Activated B cell treated with CpG ODN at 0.5 μM for 24 hours (primary cell): ENCODE measurements at regions of chr3 and their contacts with region 1.

Region 1: DNA sequence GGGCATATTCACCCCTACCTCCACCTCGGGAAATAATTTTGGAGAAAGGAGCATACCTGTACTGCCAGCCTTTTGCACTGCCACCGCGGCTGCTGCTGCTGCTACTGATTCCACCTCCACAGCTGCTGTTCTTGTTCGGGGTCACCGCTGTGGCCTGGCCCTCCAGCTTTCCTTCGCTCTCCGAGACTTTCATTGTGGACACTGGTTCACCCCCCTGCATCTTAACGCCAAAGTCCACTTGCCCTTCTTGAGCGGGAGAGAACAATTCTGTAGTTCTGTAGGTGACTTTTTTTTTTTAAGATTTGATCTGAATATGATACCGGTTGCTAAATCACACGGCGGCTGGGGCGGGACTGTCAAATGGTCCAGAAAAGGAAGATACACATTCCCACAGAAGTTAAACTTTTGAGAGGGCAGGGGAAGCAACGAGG is 701 bp downstream of the OSBPL11 start:
- DNase-seq: no peak
- ATAC-seq: no peak
- H3K4me3 Mint-ChIP-seq: peak overlapping the region; percentile 97
- H3K27ac Mint-ChIP-seq: peak overlapping the region; percentile 92
- H3K4me1 Mint-ChIP-seq: peaks cover 44% of the 10 kb centered on the region
- H3K27me3 Mint-ChIP-seq: no peaks in the 10 kb centered on the region
- CTCF ChIP-seq: no peak

Region 2: DNA sequence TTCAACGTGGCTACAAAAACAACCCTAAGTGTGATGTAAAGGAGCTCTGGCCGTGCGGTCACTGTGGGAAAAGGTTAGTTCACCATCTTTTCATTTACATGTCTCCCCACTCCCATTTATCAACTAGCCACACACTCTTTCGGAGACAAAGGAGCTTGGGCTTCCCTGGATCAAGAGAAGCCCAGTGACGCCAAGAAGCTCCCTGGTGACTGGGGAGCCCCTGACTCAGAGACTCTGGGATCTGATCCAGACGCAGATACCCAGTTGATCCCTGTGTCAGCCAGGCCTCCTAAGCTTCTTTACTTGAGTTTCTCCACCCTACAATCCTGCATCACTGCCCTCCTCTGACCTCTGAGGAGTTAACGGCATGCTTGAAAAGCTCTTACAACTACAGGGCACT is 582.7 kb before region 1 on chr3:
- CTCF ChIA-PET with region 1: no interaction called
- POLR2A ChIA-PET with region 1: no interaction called
- intact Hi-C with region 1: no loop called
- DNase-seq: no peak
- ATAC-seq: no peak
- H3K4me3 Mint-ChIP-seq: no peak overlapping the region
- H3K27ac Mint-ChIP-seq: no peak overlapping the region
- H3K4me1 Mint-ChIP-seq: no peaks in the 10 kb centered on the region
- H3K27me3 Mint-ChIP-seq: no peaks in the 10 kb centered on the region
- CTCF ChIP-seq: no peak

Region 3: DNA sequence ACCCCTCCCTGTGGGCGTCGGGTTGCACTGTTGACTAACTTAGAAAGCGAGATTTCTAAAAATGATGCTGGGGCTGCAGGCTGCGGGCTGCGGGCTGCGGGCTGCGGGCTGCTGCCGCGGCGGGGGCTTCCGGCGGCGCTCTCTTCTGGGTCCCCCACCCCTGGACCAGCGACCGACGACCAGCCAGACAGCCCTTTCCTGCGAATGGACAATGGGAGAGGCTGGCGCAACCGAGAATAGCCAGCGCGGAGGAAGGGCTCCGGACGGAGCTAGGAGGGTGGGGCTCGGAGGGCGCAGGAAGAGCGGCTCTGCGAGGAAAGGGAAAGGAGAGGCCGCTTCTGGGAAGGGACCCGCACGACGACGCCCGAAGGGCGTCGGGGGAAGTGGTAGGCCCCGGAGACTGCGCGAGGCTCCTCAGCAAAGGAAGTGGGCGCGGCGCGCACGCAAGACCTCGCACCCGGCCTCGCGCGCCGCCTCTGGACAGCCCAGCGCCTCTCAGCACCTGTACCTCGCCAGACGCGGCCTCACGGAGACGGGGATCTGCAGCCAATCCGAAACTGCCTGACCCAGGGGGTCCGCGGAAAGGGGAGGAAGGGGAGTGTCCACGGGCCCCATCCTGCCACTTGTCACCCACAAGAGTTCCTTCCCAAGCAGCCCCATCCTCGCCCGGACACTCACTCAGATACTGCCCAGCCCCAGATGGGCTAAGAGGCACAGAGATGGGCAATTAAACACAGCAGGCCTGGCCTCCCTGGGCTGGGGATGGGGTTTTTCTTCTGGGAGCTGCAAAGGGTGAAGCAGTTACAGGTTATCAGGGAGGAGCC is 452.8 kb before region 1 on chr3:
- CTCF ChIA-PET with region 1: no interaction called
- POLR2A ChIA-PET with region 1: interaction called, 6 read pairs
- intact Hi-C with region 1: loop called (anchors 10 kb)
- DNase-seq: peak; percentile 44
- ATAC-seq: peak; percentile 88
- H3K4me3 Mint-ChIP-seq: peak overlapping the region; percentile 82
- H3K27ac Mint-ChIP-seq: peak overlapping the region; percentile 79
- H3K4me1 Mint-ChIP-seq: peaks cover 66% of the 10 kb centered on the region
- H3K27me3 Mint-ChIP-seq: no peaks in the 10 kb centered on the region
- CTCF ChIP-seq: no peak

Region 4: DNA sequence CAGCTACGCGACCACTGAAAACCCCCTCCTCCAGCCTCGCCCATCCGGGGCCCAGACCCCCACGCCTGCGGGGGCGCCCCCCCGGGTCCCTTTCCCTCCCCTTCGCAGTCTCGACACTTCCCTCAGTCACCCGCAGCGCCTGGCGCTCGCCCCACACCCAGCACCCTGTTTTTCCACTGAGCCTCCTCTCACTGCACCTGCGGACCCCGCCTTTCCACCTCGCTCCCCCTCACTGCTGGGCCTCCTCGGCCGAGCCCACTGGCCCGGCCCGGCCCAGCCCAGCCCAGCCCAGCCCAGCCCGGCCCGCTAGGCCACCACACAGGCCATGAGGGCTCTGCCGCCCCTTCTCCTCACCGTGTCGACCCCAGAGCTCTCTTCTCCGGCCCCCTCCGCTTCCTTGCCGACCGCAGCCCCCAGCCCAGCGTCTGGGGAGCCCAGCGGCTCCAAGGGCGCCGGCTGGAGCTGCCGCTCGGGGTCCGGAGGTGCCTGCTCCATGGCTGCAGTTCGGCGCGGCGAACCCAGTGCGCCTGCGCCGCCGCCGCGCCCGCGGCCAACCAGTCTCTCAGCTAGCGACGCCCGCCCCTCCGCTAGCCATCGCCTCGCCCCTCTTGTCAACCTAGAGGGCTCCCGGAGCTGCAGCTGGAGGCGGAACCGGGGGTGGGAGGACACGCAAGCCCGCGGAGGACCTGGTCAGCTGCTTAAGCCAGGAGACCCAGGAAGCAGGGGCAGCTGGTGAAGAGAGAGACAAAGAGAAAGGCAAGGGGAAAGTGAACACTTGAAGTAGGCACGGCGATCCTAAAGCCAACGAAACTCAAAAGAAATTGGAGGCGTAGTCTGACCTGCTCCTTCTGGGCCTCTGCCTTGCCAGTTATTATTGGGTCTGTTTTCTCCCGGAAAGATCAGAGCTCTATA is 74.7 kb before region 1 on chr3 and contains the start of gene SNX4:
- CTCF ChIA-PET with region 1: no interaction called
- POLR2A ChIA-PET with region 1: interaction called, 17 read pairs
- intact Hi-C with region 1: loop called (anchors 1 kb)
- DNase-seq: peak; percentile 79
- ATAC-seq: peak; percentile 97
- H3K4me3 Mint-ChIP-seq: peak within 1 kb of the TSS; percentile 98
- H3K27ac Mint-ChIP-seq: peak within 1 kb of the TSS; percentile 92
- H3K4me1 Mint-ChIP-seq: peaks cover 39% of the 10 kb centered on the region
- H3K27me3 Mint-ChIP-seq: no peaks in the 10 kb centered on the region
- CTCF ChIP-seq: no peak
- total RNA-seq, gene SNX4: 28.2 and 30.2 TPM in 2 replicates

Region 5: DNA sequence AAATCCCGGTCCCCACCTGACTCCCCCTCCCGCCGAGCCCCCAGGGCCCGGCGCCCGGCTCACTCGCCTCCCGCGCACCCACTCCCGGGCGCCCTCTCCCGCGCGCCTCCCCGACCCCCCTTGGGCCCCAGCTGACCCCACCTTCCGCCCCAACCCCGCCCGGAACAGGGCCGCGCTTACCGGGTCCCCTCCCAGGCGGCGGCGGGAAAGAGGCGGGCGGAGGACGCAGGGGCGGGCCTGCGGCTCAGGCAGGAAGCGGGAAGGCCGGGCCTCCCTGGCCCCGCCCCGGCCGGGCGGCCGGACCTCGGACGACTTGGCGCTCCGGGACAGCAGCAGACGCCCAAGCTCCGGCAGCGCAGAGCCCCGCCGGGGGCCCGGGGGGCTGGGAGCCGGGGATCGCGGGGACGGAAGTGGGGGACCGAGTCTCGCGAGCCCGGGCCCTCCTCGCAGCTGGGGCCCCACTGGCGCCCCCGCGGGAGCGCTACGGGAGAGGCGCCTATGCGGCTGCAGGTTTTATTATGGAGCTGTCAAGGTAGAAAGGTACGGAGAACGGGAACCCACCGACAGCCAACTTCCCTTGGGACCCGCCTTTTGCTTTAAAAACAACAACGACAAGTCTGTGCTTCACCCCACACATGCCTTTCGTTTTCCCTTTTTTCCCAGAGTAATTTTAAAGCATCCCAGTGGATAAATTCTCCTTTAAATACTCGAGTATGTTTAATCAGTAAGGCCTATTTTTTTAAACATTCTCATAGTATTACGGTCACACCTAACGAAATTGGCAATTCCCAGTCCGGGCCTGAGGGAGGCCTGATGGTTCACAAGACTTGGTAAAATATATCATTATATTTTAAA is 489.5 kb after region 1 on chr3 and contains the start of gene SLC41A3:
- CTCF ChIA-PET with region 1: no interaction called
- POLR2A ChIA-PET with region 1: interaction called, 7 read pairs
- intact Hi-C with region 1: loop called (anchors 5 kb)
- DNase-seq: peak; percentile 87
- ATAC-seq: peak; percentile 93
- H3K4me3 Mint-ChIP-seq: peak within 1 kb of the TSS; percentile 88
- H3K27ac Mint-ChIP-seq: peak within 1 kb of the TSS; percentile 85
- H3K4me1 Mint-ChIP-seq: peaks cover 16% of the 10 kb centered on the region
- H3K27me3 Mint-ChIP-seq: no peaks in the 10 kb centered on the region
- CTCF ChIP-seq: no peak
- total RNA-seq, gene SLC41A3: 34.8 and 36.2 TPM in 2 replicates